WTC11 (cell line): ENCODE measurements at regions of chr10 and their contacts with region 1.

Region 1: GRCh38 chr10:74011770-74012169 is 13.9 kb downstream of the VCL start:
- DNase-seq: no peak
- ATAC-seq: no peak
- H3K4me3 Mint-ChIP-seq: no peak overlapping the region
- H3K27ac Mint-ChIP-seq: peak overlapping the region; percentile 54; the same call in 1 of the 2 replicates
- H3K4me1 Mint-ChIP-seq: peaks cover 44% of the 10 kb centered on the region
- H3K27me3 Mint-ChIP-seq: no peaks in the 10 kb centered on the region
- CTCF ChIP-seq: no peak

Region 2: GRCh38 chr10:73956476-73957359 is 55.1 kb before region 1 on chr10:
- CTCF ChIA-PET with region 1: no interaction called
- POLR2A ChIA-PET with region 1: no interaction called
- DNase-seq: no peak
- ATAC-seq: peak; percentile 43
- H3K4me3 Mint-ChIP-seq: no peak overlapping the region
- H3K27ac Mint-ChIP-seq: no peak overlapping the region; the same call in 1 of the 2 replicates
- H3K4me1 Mint-ChIP-seq: peaks cover 10% of the 10 kb centered on the region
- H3K27me3 Mint-ChIP-seq: no peaks in the 10 kb centered on the region
- CTCF ChIP-seq: no peak

Region 3: GRCh38 chr10:74051736-74052342 is 40.1 kb after region 1 on chr10:
- CTCF ChIA-PET with region 1: no interaction called
- POLR2A ChIA-PET with region 1: interaction called, 12 read pairs
- DNase-seq: peak; percentile 29
- ATAC-seq: peak; percentile 91
- H3K4me3 Mint-ChIP-seq: no peak overlapping the region
- H3K27ac Mint-ChIP-seq: peak overlapping the region; percentile 32; the same call in 1 of the 2 replicates
- H3K4me1 Mint-ChIP-seq: peaks cover 19% of the 10 kb centered on the region
- H3K27me3 Mint-ChIP-seq: no peaks in the 10 kb centered on the region
- CTCF ChIP-seq: no peak